ENCODE measurements at regions of chr13 and their contacts with region 1.

Region 1: GRCh38 chr13:105282356-105283285 is 1252.8 kb downstream of the EFNB2 start:
- DNase-seq: no peak
- ATAC-seq: no peak
- H3K4me3 ChIP-seq: no peak overlapping the region
- H3K27ac ChIP-seq: no peak overlapping the region
- H3K4me1 ChIP-seq: no peaks in the 10 kb centered on the region
- H3K27me3 ChIP-seq: no peaks in the 10 kb centered on the region
- CTCF ChIP-seq: no peak
- EP300 ChIP-seq: no peak
- POLR2A ChIP-seq: no peak
- RAD21 ChIP-seq: no peak

Region 2: GRCh38 chr13:105105471-105105870 is 177.2 kb before region 1 on chr13:
- CTCF ChIA-PET with region 1: no interaction called
- POLR2A ChIA-PET with region 1: no interaction called
- in situ Hi-C with region 1: no loop called
- intact Hi-C with region 1: no loop called
- DNase-seq: no peak
- ATAC-seq: no peak
- H3K4me3 ChIP-seq: no peak overlapping the region
- H3K27ac ChIP-seq: no peak overlapping the region
- H3K4me1 ChIP-seq: no peaks in the 10 kb centered on the region
- H3K27me3 ChIP-seq: no peaks in the 10 kb centered on the region
- CTCF ChIP-seq: no peak
- EP300 ChIP-seq: no peak
- POLR2A ChIP-seq: no peak
- RAD21 ChIP-seq: no peak

Region 3: GRCh38 chr13:105177265-105177900 is 105.2 kb before region 1 on chr13:
- CTCF ChIA-PET with region 1: no interaction called
- POLR2A ChIA-PET with region 1: no interaction called
- in situ Hi-C with region 1: no loop called
- intact Hi-C with region 1: no loop called
- DNase-seq: no peak
- ATAC-seq: no peak
- H3K4me3 ChIP-seq: no peak overlapping the region
- H3K27ac ChIP-seq: no peak overlapping the region
- H3K4me1 ChIP-seq: no peaks in the 10 kb centered on the region
- H3K27me3 ChIP-seq: no peaks in the 10 kb centered on the region
- CTCF ChIP-seq: no peak
- EP300 ChIP-seq: no peak
- POLR2A ChIP-seq: no peak
- RAD21 ChIP-seq: no peak

Region 4: GRCh38 chr13:106393781-106394180 is 1111.2 kb after region 1 on chr13:
- CTCF ChIA-PET with region 1: no interaction called
- POLR2A ChIA-PET with region 1: no interaction called
- in situ Hi-C with region 1: no loop called
- intact Hi-C with region 1: loop called (anchors 10 kb)
- DNase-seq: no peak
- ATAC-seq: no peak
- H3K4me3 ChIP-seq: no peak overlapping the region
- H3K27ac ChIP-seq: no peak overlapping the region
- H3K4me1 ChIP-seq: no peaks in the 10 kb centered on the region
- H3K27me3 ChIP-seq: no peaks in the 10 kb centered on the region; a peak in 1 of 5 replicates
- CTCF ChIP-seq: no peak
- EP300 ChIP-seq: no peak
- POLR2A ChIP-seq: no peak
- RAD21 ChIP-seq: no peak

Measured in HepG2 (cell line).